PC-3 (cell line): ENCODE measurements at regions of chr17 and their contacts with region 1.

Region 1: DNA sequence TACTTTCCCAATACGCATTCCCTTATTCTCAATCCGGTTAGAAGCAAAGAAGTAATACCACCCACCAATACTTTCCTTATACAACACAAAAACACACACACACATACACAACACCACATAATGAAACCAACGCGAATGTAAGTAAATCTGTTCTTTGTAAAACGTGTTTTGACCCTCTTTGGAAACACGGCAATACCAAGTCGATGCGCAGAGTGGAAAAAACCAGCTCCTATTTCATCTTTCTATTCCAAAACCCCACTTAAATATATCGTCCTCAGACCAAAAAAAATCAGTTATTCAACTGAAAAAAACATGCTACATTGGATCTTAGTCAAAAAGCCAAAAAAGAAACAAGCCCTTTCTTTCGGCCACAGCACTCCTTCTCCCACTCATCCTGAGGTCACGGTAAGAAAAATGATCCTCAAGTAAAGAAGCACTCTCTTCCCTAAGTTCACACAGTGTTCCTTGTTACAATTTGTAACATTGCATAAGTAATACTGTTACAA is 31.0 kb upstream of the ARL4D start:
- DNase-seq: peak; percentile 90
- ATAC-seq: peak; percentile 73
- H3K4me3 ChIP-seq: peak overlapping the region; percentile 66
- H3K27ac ChIP-seq: peak overlapping the region; percentile 92
- H3K4me1 ChIP-seq: peaks cover 12% of the 10 kb centered on the region
- H3K27me3 ChIP-seq: no peaks in the 10 kb centered on the region
- CTCF ChIP-seq: no peak

Region 2: GRCh38 chr17:42832974-42833766 is 534.6 kb before region 1 on chr17 and contains the start of gene PSME3:
- CTCF ChIA-PET with region 1: no interaction called
- POLR2A ChIA-PET with region 1: no interaction called
- intact Hi-C with region 1: no loop called
- DNase-seq: peak; percentile 80
- ATAC-seq: peak; percentile 91
- H3K4me3 ChIP-seq: peak within 1 kb of the TSS; percentile 96
- H3K27ac ChIP-seq: peak within 1 kb of the TSS; percentile 75
- H3K4me1 ChIP-seq: peaks cover 12% of the 10 kb centered on the region
- H3K27me3 ChIP-seq: no peaks in the 10 kb centered on the region
- CTCF ChIP-seq: no peak
- total RNA-seq, gene PSME3: 107 and 123 TPM in 2 replicates

Region 3: GRCh38 chr17:43314611-43315011 is 53.2 kb before region 1 on chr17:
- CTCF ChIA-PET with region 1: no interaction called
- POLR2A ChIA-PET with region 1: interaction called, 10 read pairs
- intact Hi-C with region 1: no loop called
- DNase-seq: no peak
- ATAC-seq: no peak
- H3K4me3 ChIP-seq: no peak overlapping the region
- H3K27ac ChIP-seq: no peak overlapping the region
- H3K4me1 ChIP-seq: no peaks in the 10 kb centered on the region
- H3K27me3 ChIP-seq: no peaks in the 10 kb centered on the region
- CTCF ChIP-seq: no peak

Region 4: DNA sequence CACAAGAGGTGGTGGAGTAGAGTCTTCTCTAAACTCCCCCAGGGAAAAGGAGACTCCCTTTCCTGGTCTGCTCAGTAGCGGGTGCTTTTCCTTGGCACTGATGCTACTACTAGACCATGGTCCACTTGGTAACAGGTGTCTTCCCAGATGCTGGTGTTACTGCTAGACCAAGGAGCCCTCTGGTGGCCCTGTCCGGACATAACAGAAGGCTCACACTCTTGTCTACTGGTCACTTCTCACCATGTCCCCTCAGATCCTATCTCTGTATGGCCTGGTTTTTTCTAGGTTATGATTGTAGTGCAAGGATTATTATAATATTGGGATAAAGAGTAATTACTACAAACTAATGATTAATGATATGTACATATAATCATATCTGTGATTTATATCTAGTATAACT is 18.6 kb before region 1 on chr17:
- CTCF ChIA-PET with region 1: no interaction called
- POLR2A ChIA-PET with region 1: no interaction called
- intact Hi-C with region 1: no loop called
- DNase-seq: no peak
- ATAC-seq: no peak
- H3K4me3 ChIP-seq: no peak overlapping the region
- H3K27ac ChIP-seq: no peak overlapping the region
- H3K4me1 ChIP-seq: peaks cover 19% of the 10 kb centered on the region; the same call in 1 of the 2 replicates
- H3K27me3 ChIP-seq: no peaks in the 10 kb centered on the region
- CTCF ChIP-seq: peak; percentile 16; the same call in 1 of the 2 replicates

Region 5: DNA sequence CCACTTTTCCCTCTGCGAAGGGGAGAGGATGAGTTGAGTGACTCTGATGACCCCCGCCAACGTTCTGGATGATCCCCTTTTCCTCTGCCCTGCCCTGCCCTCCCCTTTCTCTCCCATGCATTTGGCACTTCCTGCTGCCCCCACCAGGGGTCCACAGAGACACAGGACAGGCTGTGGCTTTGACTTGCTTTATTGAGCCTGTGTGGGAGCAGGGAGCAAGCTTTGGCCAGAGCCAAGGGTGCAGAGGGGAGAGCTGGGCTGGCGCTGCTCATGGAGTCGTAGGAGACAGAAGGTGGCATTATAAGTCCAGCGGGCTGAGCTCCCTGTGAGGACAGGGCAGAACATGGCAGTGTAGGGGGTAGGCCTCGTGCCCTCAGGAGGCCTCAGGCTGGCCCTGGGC is 572.8 kb after region 1 on chr17:
- CTCF ChIA-PET with region 1: no interaction called
- POLR2A ChIA-PET with region 1: no interaction called
- intact Hi-C with region 1: no loop called
- DNase-seq: peak; percentile 60
- ATAC-seq: peak; percentile 31; the same call in 1 of the 2 replicates
- H3K4me3 ChIP-seq: no peak overlapping the region
- H3K27ac ChIP-seq: no peak overlapping the region
- H3K4me1 ChIP-seq: peaks cover 3% of the 10 kb centered on the region; the same call in 1 of the 2 replicates
- H3K27me3 ChIP-seq: no peaks in the 10 kb centered on the region
- CTCF ChIP-seq: peak; percentile 70